Naive thymus-derived CD4-positive, alpha-beta T cell (primary cell): ENCODE measurements at regions of chr11 and their contacts with region 1.

Region 1: GRCh38 chr11:118435893-118436624 is at the start of gene KMT2A:
- DNase-seq: peak; percentile 89 to 100 (median 96)
- ATAC-seq: peak; percentile 94
- H3K4me3 ChIP-seq: peak within 1 kb of the TSS; percentile 91
- H3K4me3 Mint-ChIP-seq: peak within 1 kb of the TSS; percentile 89 to 97 (median 96)
- H3K27ac ChIP-seq: peak within 1 kb of the TSS; percentile 99
- H3K27ac Mint-ChIP-seq: peak within 1 kb of the TSS; percentile 91 to 99 (median 95)
- H3K4me1 ChIP-seq: peaks cover 24 to 28% of the 10 kb centered on the region in 2 donors
- H3K4me1 Mint-ChIP-seq: peaks cover 36 to 45% (median 38%) of the 10 kb centered on the region in 7 donors
- H3K27me3 ChIP-seq: no peaks in the 10 kb centered on the region
- H3K27me3 Mint-ChIP-seq: peaks cover 0 to 8% (median 0%) of the 10 kb centered on the region in 5 donors
- total RNA-seq, gene KMT2A: 140 to 192 (median 161) TPM

Region 2: DNA sequence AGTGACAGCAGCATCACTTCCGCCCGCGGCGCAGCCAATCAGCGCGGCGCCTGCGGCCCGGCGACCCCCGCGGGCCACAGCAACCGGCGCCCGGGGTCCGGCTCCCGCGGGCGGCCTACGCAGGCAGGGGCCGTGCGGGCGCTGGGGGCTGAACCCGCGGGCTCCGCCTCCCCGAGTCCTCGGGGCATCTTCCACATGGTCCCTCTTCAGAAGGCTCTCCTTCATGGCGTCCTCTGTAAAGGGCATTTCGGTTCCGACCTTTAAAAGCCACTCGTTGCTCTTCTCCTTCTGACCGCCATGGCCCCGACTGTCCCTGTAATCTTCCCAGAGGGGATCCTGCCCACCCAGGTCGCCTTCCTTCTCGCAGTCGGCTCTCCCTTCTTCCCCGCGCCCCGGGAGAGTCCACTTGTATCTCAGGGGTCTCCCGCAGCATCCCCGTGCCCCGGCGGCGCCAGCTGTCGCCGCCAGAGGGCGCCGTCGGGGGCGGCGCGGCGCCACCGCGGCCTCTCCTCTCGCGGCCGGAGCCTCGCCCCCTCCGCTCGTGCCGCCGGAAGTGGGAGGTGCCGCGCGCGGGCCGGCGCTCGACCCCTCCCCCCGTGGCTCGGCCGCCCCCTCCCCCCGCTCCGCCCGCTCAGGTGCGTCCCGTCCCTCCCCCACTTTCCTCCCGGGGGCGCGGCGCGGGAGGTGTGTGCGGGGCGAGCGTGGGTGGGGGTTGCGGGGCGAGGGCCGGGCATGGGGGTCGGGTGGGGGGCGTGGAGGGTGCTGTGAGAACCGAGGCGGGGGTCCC is 1203.8 kb before region 1 on chr11 and contains the start of gene RNF214:
- CTCF ChIA-PET with region 1: no interaction called
- POLR2A ChIA-PET with region 1: no interaction called
- intact Hi-C with region 1: loop called in 1 of 2 experiments (anchors 5 kb)
- DNase-seq: peak; percentile 61 to 84 (median 73)
- ATAC-seq: peak; percentile 92
- H3K4me3 ChIP-seq: peak within 1 kb of the TSS; percentile 96
- H3K4me3 Mint-ChIP-seq: peak within 1 kb of the TSS; percentile 91 to 100 (median 98)
- H3K27ac ChIP-seq: peak within 1 kb of the TSS; percentile 97
- H3K27ac Mint-ChIP-seq: peak within 1 kb of the TSS; percentile 94 to 100 (median 99)
- H3K4me1 ChIP-seq: peaks cover 32 to 35% of the 10 kb centered on the region in 2 donors
- H3K4me1 Mint-ChIP-seq: peaks cover 40 to 55% (median 50%) of the 10 kb centered on the region in 7 donors
- H3K27me3 ChIP-seq: no peaks in the 10 kb centered on the region
- H3K27me3 Mint-ChIP-seq: no peaks in the 10 kb centered on the region
- total RNA-seq, gene RNF214: 16.6 to 36.0 (median 24.0) TPM

Region 3: GRCh38 chr11:118338637-118339061 is 97.4 kb before region 1 on chr11:
- CTCF ChIA-PET with region 1: no interaction called
- POLR2A ChIA-PET with region 1: interaction called, 5 read pairs
- intact Hi-C with region 1: loop called in 1 of 2 experiments (anchors 2 kb)
- DNase-seq: peak; percentile 46 to 99 (median 92)
- ATAC-seq: peak; percentile 82
- H3K4me3 ChIP-seq: peak overlapping the region; percentile 88
- H3K4me3 Mint-ChIP-seq: peak overlapping the region; percentile 89 to 98 (median 96)
- H3K27ac ChIP-seq: peak overlapping the region; percentile 96
- H3K27ac Mint-ChIP-seq: peak overlapping the region; percentile 95 to 100 (median 99)
- H3K4me1 ChIP-seq: peaks cover 46 to 50% of the 10 kb centered on the region in 2 donors
- H3K4me1 Mint-ChIP-seq: peaks cover 28 to 68% (median 55%) of the 10 kb centered on the region in 7 donors
- H3K27me3 ChIP-seq: no peaks in the 10 kb centered on the region
- H3K27me3 Mint-ChIP-seq: no peaks in the 10 kb centered on the region

Region 4: GRCh38 chr11:118401151-118401878 is 34.7 kb before region 1 on chr11 and contains the start of gene ATP5MG:
- CTCF ChIA-PET with region 1: interaction called, 4 read pairs
- POLR2A ChIA-PET with region 1: interaction called, 31 read pairs
- intact Hi-C with region 1: loop called (anchors 1 kb)
- DNase-seq: peak; percentile 83 to 96 (median 93)
- ATAC-seq: peak; percentile 71
- H3K4me3 ChIP-seq: peak within 1 kb of the TSS; percentile 79
- H3K4me3 Mint-ChIP-seq: peak within 1 kb of the TSS; percentile 97 to 99 (median 98)
- H3K27ac ChIP-seq: peak within 1 kb of the TSS; percentile 97
- H3K27ac Mint-ChIP-seq: peak within 1 kb of the TSS; percentile 97 to 100 (median 100)
- H3K4me1 ChIP-seq: peaks cover 37 to 58% of the 10 kb centered on the region in 2 donors
- H3K4me1 Mint-ChIP-seq: peaks cover 39 to 78% (median 71%) of the 10 kb centered on the region in 7 donors
- H3K27me3 ChIP-seq: no peaks in the 10 kb centered on the region
- H3K27me3 Mint-ChIP-seq: peaks cover 0 to 2% (median 0%) of the 10 kb centered on the region in 5 donors
- total RNA-seq, gene ATP5MG: 140 to 241 (median 154) TPM

Region 5: DNA sequence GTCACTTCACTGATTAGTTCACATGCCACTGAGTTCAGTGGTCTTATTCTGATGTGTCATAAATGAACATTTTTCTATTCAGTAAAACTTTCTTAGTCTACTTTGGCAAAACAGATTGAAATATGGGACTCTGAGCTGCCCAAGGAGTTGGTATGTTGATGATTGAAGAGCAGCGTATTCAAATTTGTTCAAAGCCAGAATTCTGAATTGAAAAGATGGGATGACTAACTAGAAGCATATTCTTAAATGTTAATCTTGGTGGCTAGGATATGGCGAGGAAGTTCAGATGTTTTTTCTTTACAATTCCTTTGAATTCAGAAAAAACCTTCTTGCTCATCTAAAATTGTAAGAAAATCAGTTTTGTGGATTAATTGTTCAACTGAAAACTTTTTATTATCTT is 35.0 kb after region 1 on chr11:
- CTCF ChIA-PET with region 1: no interaction called
- POLR2A ChIA-PET with region 1: no interaction called
- intact Hi-C with region 1: loop called (anchors 5 kb)
- DNase-seq: no peak
- ATAC-seq: no peak
- H3K4me3 ChIP-seq: no peak overlapping the region
- H3K4me3 Mint-ChIP-seq: no peak overlapping the region
- H3K27ac ChIP-seq: no peak overlapping the region
- H3K27ac Mint-ChIP-seq: peak overlapping the region in 7 of 9 donors; percentile 7 to 87 (median 73)
- H3K4me1 ChIP-seq: peaks cover 5 to 9% of the 10 kb centered on the region in 2 donors
- H3K4me1 Mint-ChIP-seq: peaks cover 12 to 63% (median 40%) of the 10 kb centered on the region in 7 donors
- H3K27me3 ChIP-seq: no peaks in the 10 kb centered on the region
- H3K27me3 Mint-ChIP-seq: no peaks in the 10 kb centered on the region

Region 6: GRCh38 chr11:118997627-118998387 is 561.7 kb after region 1 on chr11 and contains the start of gene CENATAC:
- CTCF ChIA-PET with region 1: no interaction called
- POLR2A ChIA-PET with region 1: interaction called, 4 read pairs
- intact Hi-C with region 1: loop called in 1 of 2 experiments (anchors 5 kb)
- DNase-seq: peak; percentile 91 to 98 (median 94)
- ATAC-seq: peak; percentile 98
- H3K4me3 ChIP-seq: peak within 1 kb of the TSS; percentile 91
- H3K4me3 Mint-ChIP-seq: peak within 1 kb of the TSS; percentile 87 to 99 (median 94)
- H3K27ac ChIP-seq: peak within 1 kb of the TSS; percentile 85
- H3K27ac Mint-ChIP-seq: peak within 1 kb of the TSS; percentile 87 to 98 (median 92)
- H3K4me1 ChIP-seq: peaks cover 6 to 16% of the 10 kb centered on the region in 2 donors
- H3K4me1 Mint-ChIP-seq: peaks cover 26 to 45% (median 37%) of the 10 kb centered on the region in 7 donors
- H3K27me3 ChIP-seq: no peaks in the 10 kb centered on the region
- H3K27me3 Mint-ChIP-seq: no peaks in the 10 kb centered on the region
- total RNA-seq, gene CENATAC: 53.5 to 136 (median 109) TPM